SK-N-SH (cell line): ENCODE measurements at regions of chr10 and their contacts with region 1.

Region 1: GRCh38 chr10:109852475-109853037 is 70.8 kb downstream of the XPNPEP1 start:
- DNase-seq: peak; percentile 79
- H3K4me3 ChIP-seq: peak overlapping the region in 1 of 2 experiments; percentile 31; a peak in 1 of 4 replicates
- H3K27ac ChIP-seq: no peak overlapping the region
- H3K4me1 ChIP-seq: peaks cover 0 to 9% of the 10 kb centered on the region in 2 experiments; a peak in 1 of 4 replicates
- H3K27me3 ChIP-seq: no peaks in the 10 kb centered on the region; the same call in 1 of the 2 replicates
- CTCF ChIP-seq: peak; percentile 91
- EP300 ChIP-seq: no peak
- RAD21 ChIP-seq: peak; percentile 94

Region 2: DNA sequence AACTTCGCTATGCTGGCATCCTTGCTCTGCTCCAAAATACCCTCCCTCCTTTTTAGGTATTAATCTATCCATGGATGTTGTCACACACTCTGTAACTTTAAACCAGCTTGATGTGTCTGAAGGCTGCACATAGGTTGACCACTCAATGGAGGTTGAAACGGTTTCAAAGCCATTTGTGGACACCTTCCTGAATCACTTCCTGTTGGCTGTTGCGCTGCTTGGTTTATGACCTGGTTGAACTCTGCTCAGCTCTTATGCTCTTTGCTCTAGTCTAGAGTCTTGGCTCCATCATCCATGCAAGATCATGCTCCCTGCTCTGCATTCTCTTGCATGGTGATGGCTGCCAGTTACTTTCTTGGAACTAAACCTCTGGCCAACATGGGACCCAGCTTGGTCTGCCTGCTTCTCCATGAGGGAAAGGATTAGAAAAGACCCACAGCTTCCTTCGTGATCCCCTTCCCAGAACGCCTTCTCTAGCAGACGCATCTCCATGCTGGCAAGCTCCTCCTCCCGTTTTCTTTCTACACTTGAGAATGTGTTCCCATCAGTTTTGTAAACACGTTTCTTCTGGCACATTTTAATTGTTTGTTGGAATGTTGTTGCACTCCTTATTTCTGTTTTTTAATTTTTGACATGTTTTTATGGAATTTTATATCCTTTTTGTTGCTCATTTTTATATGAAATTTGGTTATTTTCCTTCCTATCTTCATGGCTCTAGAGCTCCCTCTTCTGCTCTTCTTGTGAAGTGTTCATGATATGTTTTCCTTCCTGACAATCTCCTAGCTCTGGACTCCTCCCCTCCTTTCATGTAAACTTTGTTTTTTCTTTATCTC is 79.1 kb before region 1 on chr10:
- CTCF ChIA-PET with region 1: interaction called, 13 read pairs
- POLR2A ChIA-PET with region 1: no interaction called
- DNase-seq: peak; percentile 30
- H3K4me3 ChIP-seq: peak overlapping the region in 1 of 2 experiments; percentile 29; a peak in 1 of 4 replicates
- H3K27ac ChIP-seq: no peak overlapping the region
- H3K4me1 ChIP-seq: no peaks in the 10 kb centered on the region
- H3K27me3 ChIP-seq: no peaks in the 10 kb centered on the region
- CTCF ChIP-seq: peak; percentile 78
- EP300 ChIP-seq: no peak
- RAD21 ChIP-seq: peak; percentile 72

Region 3: DNA sequence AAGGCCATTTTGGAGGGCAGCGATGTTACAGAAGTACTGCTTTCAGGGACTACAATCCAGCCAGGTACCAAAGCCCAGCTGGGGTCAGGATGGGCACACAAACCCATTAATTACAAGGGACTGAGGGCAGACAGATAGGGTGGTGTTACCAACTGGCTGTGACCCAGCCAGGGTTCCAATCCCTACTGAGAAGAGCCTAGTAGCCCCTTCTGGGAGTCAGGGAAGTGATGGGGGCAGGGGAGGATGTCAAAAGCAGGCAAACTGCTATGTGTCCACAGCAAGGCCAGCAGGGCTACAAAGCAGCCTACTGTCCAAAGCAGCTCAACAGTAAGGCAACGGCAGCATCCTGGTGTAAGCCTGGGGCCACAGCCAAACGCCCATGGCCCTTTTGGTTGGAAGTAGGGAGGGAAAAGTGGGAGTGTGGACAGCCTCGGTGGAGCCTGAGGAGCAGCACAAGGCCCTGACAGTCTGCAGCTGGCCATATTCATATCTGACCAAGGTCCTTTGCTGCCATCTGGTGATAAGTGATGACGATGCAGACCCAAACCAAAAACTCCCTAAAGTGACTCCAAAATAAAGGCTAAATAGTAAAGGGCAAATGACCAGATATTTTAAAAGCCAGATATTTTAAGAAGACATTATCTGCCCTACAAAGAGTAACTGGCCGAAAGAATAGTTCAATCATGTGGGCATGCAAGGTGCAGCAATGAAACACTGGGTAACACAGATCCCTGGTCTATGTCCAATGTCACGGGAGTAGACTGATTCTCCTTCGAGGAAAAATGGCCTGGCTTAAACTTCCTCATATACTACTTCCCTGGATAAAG is 13.8 kb after region 1 on chr10:
- CTCF ChIA-PET with region 1: interaction called, 27 read pairs
- POLR2A ChIA-PET with region 1: no interaction called
- DNase-seq: peak; percentile 39
- H3K4me3 ChIP-seq: no peak overlapping the region
- H3K27ac ChIP-seq: no peak overlapping the region
- H3K4me1 ChIP-seq: no peaks in the 10 kb centered on the region
- H3K27me3 ChIP-seq: no peaks in the 10 kb centered on the region
- CTCF ChIP-seq: peak; percentile 39
- EP300 ChIP-seq: no peak
- RAD21 ChIP-seq: peak; percentile 61